B cell (primary cell): ENCODE measurements at regions of chr3 and their contacts with region 1.

Region 1: GRCh38 chr3:32684800-32685542 is at the start of gene CNOT10:
- DNase-seq: peak; percentile 97
- ATAC-seq: peak; percentile 93
- H3K4me3 ChIP-seq: peak within 1 kb of the TSS; percentile 76 to 97 (median 88)
- H3K4me3 Mint-ChIP-seq: peak within 1 kb of the TSS; percentile 95
- H3K27ac ChIP-seq: peak within 1 kb of the TSS; percentile 77 to 95
- H3K27ac Mint-ChIP-seq: peak within 1 kb of the TSS; percentile 95
- H3K4me1 ChIP-seq: peaks cover 19 to 20% of the 10 kb centered on the region in 2 donors
- H3K4me1 Mint-ChIP-seq: peaks cover 36% of the 10 kb centered on the region
- H3K27me3 ChIP-seq: no peaks in the 10 kb centered on the region
- H3K27me3 Mint-ChIP-seq: no peaks in the 10 kb centered on the region
- CTCF ChIP-seq: no peak
- total RNA-seq, gene CNOT10: 66.2 and 69.0 TPM in 2 replicates

Region 2: DNA sequence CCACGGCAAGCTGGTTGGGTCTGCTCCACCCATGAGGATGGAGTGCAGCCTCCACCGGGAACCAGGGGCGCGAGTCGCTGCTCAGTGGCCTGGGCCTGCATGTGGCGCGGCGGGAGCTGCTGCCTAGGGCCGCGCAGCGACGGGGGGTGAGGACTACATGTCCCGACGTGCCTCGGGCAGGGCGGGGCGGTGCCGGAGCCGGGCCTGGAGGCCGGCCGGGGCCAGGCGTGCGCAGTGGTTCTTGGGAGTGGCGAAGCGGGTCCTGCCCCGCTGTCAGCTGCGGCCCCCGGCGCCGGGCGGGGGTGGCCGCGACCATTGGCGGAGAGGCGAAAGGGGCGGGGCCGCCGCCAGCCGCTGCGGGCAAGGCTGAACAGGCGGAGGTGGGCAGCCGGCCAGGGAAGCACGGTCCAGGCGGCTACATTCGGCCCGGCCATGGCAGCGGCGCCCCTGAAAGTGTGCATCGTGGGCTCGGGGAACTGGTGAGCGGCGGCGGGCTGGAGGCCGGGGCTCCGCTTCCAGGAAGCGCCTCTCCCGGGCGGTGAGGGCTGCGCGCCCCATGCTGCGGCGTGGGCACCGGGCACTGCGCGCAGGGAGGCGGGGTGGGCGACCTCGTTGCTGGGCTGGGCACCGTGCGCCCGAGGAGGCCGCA is 578.6 kb before region 1 on chr3 and contains the start of gene GPD1L:
- CTCF ChIA-PET with region 1: no interaction called
- POLR2A ChIA-PET with region 1: no interaction called
- intact Hi-C with region 1: loop called (anchors 2 kb)
- DNase-seq: peak; percentile 94
- ATAC-seq: peak; percentile 99
- H3K4me3 ChIP-seq: peak within 1 kb of the TSS; percentile 46 to 79 (median 75)
- H3K4me3 Mint-ChIP-seq: peak within 1 kb of the TSS; percentile 94
- H3K27ac ChIP-seq: no peak within 1 kb of the TSS
- H3K27ac Mint-ChIP-seq: peak within 1 kb of the TSS; percentile 88
- H3K4me1 ChIP-seq: peaks cover 11 to 14% of the 10 kb centered on the region in 2 donors
- H3K4me1 Mint-ChIP-seq: peaks cover 15% of the 10 kb centered on the region
- H3K27me3 ChIP-seq: no peaks in the 10 kb centered on the region
- H3K27me3 Mint-ChIP-seq: no peaks in the 10 kb centered on the region
- CTCF ChIP-seq: no peak
- total RNA-seq, gene GPD1L: 9.3 TPM in 2 replicates

Region 3: GRCh38 chr3:32502118-32502945 is 182.6 kb before region 1 on chr3 and contains the start of gene CMTM6:
- CTCF ChIA-PET with region 1: no interaction called
- POLR2A ChIA-PET with region 1: interaction called, 3 read pairs
- intact Hi-C with region 1: loop called (anchors 1 kb)
- DNase-seq: peak; percentile 86
- ATAC-seq: peak; percentile 83
- H3K4me3 ChIP-seq: peak within 1 kb of the TSS; percentile 82 to 99 (median 97)
- H3K4me3 Mint-ChIP-seq: peak within 1 kb of the TSS; percentile 90
- H3K27ac ChIP-seq: peak within 1 kb of the TSS; percentile 99
- H3K27ac Mint-ChIP-seq: peak within 1 kb of the TSS; percentile 93
- H3K4me1 ChIP-seq: peaks cover 26 to 29% of the 10 kb centered on the region in 2 donors
- H3K4me1 Mint-ChIP-seq: peaks cover 36% of the 10 kb centered on the region
- H3K27me3 ChIP-seq: no peaks in the 10 kb centered on the region
- H3K27me3 Mint-ChIP-seq: no peaks in the 10 kb centered on the region
- CTCF ChIP-seq: no peak
- total RNA-seq, gene CMTM6: 66.3 and 67.7 TPM in 2 replicates

Region 4: GRCh38 chr3:32570421-32571191 is 114.4 kb before region 1 on chr3 and contains the start of gene DYNC1LI1:
- CTCF ChIA-PET with region 1: no interaction called
- POLR2A ChIA-PET with region 1: no interaction called
- intact Hi-C with region 1: loop called (anchors 1 kb)
- DNase-seq: peak; percentile 95
- ATAC-seq: peak; percentile 96
- H3K4me3 ChIP-seq: peak within 1 kb of the TSS; percentile 55 to 96 (median 92)
- H3K4me3 Mint-ChIP-seq: peak within 1 kb of the TSS; percentile 94
- H3K27ac ChIP-seq: peak within 1 kb of the TSS; percentile 84 to 93
- H3K27ac Mint-ChIP-seq: peak within 1 kb of the TSS; percentile 94
- H3K4me1 ChIP-seq: peaks cover 22 to 24% of the 10 kb centered on the region in 2 donors
- H3K4me1 Mint-ChIP-seq: peaks cover 29% of the 10 kb centered on the region
- H3K27me3 ChIP-seq: no peaks in the 10 kb centered on the region
- H3K27me3 Mint-ChIP-seq: no peaks in the 10 kb centered on the region
- CTCF ChIP-seq: no peak
- total RNA-seq, gene DYNC1LI1: 38.8 and 47.8 TPM in 2 replicates

Region 5: GRCh38 chr3:32781210-32781968 is 96.4 kb after region 1 on chr3:
- CTCF ChIA-PET with region 1: no interaction called
- POLR2A ChIA-PET with region 1: no interaction called
- intact Hi-C with region 1: loop called (anchors 1 kb)
- DNase-seq: peak; percentile 81
- ATAC-seq: peak; percentile 91
- H3K4me3 ChIP-seq: peak overlapping the region; percentile 52 to 84 (median 70)
- H3K4me3 Mint-ChIP-seq: peak overlapping the region; percentile 96
- H3K27ac ChIP-seq: no peak overlapping the region
- H3K27ac Mint-ChIP-seq: peak overlapping the region; percentile 73
- H3K4me1 ChIP-seq: peaks cover 4 to 10% of the 10 kb centered on the region in 2 donors
- H3K4me1 Mint-ChIP-seq: peaks cover 8% of the 10 kb centered on the region
- H3K27me3 ChIP-seq: peaks cover 0 to 13% (median 0%) of the 10 kb centered on the region in 4 experiments
- H3K27me3 Mint-ChIP-seq: no peaks in the 10 kb centered on the region
- CTCF ChIP-seq: peak; percentile 90

Region 6: GRCh38 chr3:33096093-33096868 is 411.3 kb after region 1 on chr3:
- CTCF ChIA-PET with region 1: no interaction called
- POLR2A ChIA-PET with region 1: no interaction called
- intact Hi-C with region 1: loop called (anchors 10 kb)
- DNase-seq: peak; percentile 83
- ATAC-seq: peak; percentile 63
- H3K4me3 ChIP-seq: peak overlapping the region; percentile 83 to 100 (median 94)
- H3K4me3 Mint-ChIP-seq: peak overlapping the region; percentile 96
- H3K27ac ChIP-seq: peak overlapping the region; percentile 94 to 96
- H3K27ac Mint-ChIP-seq: peak overlapping the region; percentile 94
- H3K4me1 ChIP-seq: peaks cover 11 to 21% of the 10 kb centered on the region in 2 donors
- H3K4me1 Mint-ChIP-seq: peaks cover 35% of the 10 kb centered on the region
- H3K27me3 ChIP-seq: no peaks in the 10 kb centered on the region
- H3K27me3 Mint-ChIP-seq: no peaks in the 10 kb centered on the region
- CTCF ChIP-seq: no peak

Region 7: GRCh38 chr3:33167716-33168336 is 482.9 kb after region 1 on chr3:
- CTCF ChIA-PET with region 1: no interaction called
- POLR2A ChIA-PET with region 1: no interaction called
- intact Hi-C with region 1: no loop called
- DNase-seq: no peak
- ATAC-seq: no peak
- H3K4me3 ChIP-seq: no peak overlapping the region
- H3K4me3 Mint-ChIP-seq: no peak overlapping the region
- H3K27ac ChIP-seq: no peak overlapping the region
- H3K27ac Mint-ChIP-seq: no peak overlapping the region
- H3K4me1 ChIP-seq: peaks cover 3 to 4% of the 10 kb centered on the region in 2 donors
- H3K4me1 Mint-ChIP-seq: peaks cover 8% of the 10 kb centered on the region
- H3K27me3 ChIP-seq: no peaks in the 10 kb centered on the region
- H3K27me3 Mint-ChIP-seq: no peaks in the 10 kb centered on the region
- CTCF ChIP-seq: no peak